Activated T-helper 1 cell treated with anti-CD3 and anti-CD28 coated beads, Interleukin-12 subunit alpha, Interleukin-12 subunit beta, Interleukin-2, Interleukin-4 antibody, amounts not matched to agents 30 ng/mL and 10 ng/mL and 1 ng/mL, durations not matched to agents 14 hours and 24 hours and 36 hours (primary cell): ENCODE measurements at regions of chr4 and their contacts with region 1.

Region 1: DNA sequence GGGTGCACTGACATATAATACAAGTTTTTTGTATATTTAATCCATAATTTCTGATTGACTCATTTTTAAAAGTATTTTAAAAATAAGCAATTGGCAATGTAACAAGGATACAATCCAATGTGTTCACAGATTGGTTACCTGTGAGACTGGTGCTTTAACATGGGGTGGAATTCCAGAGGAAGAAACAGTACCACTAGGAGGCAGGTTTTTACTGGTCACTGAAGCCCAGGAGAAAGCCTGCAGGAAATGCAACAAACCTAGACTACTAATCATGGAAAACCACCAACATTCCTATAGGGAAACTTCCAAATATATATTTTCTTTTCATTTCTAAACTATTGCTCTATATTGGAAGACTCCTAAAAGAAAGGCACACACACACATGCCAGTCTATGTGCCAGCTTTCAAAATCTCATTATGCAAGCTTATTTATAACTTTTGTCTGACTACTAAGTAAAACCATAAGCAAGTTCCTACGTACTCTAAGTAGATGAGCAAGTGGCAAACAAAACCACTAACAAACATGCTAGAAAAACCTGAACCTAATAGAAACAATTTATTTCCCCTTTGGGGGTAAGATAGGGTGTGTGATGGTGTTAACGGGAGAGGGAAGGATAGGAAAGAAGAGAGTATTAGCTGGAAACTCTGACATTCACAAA is 19.2 kb downstream of the G3BP2 start:
- DNase-seq: no peak
- H3K4me3 Mint-ChIP-seq: peak overlapping the region; percentile 41
- H3K27ac Mint-ChIP-seq: peak overlapping the region; percentile 93
- H3K4me1 Mint-ChIP-seq: peaks cover 50% of the 10 kb centered on the region
- H3K27me3 Mint-ChIP-seq: no peaks in the 10 kb centered on the region

Region 2: DNA sequence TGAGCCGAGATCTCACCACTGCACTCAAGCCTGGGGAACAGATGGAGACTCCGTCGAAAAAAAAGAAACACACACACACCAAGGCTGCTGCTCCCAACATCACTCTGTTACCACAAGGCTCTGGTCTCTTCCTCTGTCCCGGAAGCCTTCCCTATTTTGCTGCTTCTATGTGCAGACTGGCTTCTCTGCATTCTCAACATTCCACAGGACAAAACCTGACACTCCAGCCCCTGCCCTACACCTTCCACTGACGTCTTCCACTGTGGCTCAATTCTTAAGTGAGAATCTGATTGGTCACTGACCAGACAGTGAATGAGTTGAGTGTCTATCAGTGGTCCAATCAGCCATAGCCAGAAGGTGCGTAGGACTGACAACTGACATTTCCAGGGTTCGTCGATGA is 92.2 kb before region 1 on chr4:
- intact Hi-C with region 1: no loop called
- DNase-seq: no peak
- H3K4me3 Mint-ChIP-seq: no peak overlapping the region
- H3K27ac Mint-ChIP-seq: no peak overlapping the region
- H3K4me1 Mint-ChIP-seq: peaks cover 16% of the 10 kb centered on the region
- H3K27me3 Mint-ChIP-seq: peaks cover 3% of the 10 kb centered on the region

Region 3: GRCh38 chr4:75630174-75630936 is 23.6 kb before region 1 on chr4 and contains the start of gene CDKL2:
- intact Hi-C with region 1: loop called (anchors 1 kb)
- DNase-seq: peak; percentile 89
- H3K4me3 Mint-ChIP-seq: peak within 1 kb of the TSS; percentile 86
- H3K27ac Mint-ChIP-seq: peak within 1 kb of the TSS; percentile 40
- H3K4me1 Mint-ChIP-seq: peaks cover 20% of the 10 kb centered on the region
- H3K27me3 Mint-ChIP-seq: peaks cover 11% of the 10 kb centered on the region
- total RNA-seq, gene CDKL2: 0.16 and 0.22 TPM in 2 replicates

Region 4: DNA sequence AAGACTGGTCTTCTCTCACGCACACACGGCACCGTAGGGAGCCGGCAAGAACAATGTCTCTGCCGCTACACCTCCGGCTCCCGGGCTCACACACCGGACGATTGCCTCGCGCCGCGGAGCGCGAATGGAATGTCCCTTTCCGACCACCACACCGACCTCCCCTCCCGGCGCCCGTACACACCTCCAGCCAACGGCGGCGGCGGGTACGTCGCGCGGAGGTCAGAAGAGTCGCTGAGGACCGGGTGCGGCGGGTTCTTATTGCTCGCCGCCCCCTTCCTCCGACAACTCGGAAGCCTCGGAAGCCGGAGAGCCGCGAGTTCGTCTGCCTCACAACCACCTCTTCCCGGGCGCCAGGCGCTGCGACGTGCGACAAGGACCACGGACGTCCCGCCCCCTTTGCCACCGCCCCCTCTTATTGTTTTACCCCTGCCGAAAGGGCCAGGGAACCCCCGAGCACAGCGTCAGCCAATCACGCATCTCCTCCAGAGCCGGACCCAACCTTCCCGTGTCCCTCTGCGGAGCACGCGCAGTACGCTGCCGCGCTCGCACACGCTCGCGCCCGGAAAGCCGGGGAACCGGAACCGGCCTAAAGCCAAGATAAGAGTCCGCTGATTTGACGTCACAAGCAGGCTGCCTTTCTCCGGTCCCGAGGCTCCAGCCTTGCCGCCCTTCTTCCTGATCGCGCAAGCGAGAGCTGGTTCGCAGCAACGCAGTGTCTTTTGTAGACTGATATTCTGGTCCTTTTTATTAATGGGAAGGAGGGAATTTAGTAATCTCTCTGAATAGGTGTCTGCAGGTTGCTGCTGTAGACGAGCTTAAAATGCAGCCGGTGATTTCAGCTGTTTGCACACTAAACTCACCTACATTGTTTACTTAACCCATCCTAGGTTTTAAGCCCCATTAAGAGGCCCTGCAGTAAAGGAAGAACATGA is 19.3 kb after region 1 on chr4 and contains the start of gene G3BP2:
- intact Hi-C with region 1: loop called (anchors 1 kb)
- DNase-seq: peak; percentile 96
- H3K4me3 Mint-ChIP-seq: peak within 1 kb of the TSS; percentile 96
- H3K27ac Mint-ChIP-seq: peak within 1 kb of the TSS; percentile 98
- H3K4me1 Mint-ChIP-seq: peaks cover 40% of the 10 kb centered on the region
- H3K27me3 Mint-ChIP-seq: no peaks in the 10 kb centered on the region
- total RNA-seq, gene G3BP2: 143 and 144 TPM in 2 replicates

Region 5: DNA sequence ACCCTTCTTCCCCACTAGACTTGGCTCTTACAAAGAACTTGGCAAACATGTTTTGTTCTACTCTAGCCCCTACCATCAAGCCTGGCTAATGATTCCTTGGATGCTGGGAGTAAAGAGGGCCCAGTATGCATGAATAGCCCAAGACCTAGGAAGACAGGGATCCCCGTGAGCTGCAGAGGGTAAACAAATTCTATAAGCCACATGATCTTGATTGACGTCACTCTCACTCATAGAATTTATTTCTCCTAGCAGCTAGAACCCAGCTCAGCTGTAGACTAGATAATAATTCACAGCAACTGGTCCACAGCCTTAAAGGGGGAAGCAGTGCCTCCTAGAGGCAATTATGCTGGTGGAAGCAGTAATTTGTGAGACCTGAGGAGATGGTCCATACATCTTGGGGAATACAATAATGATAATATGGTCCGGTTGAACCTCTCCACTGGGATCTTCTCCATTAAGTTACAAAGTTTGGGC is 54.3 kb after region 1 on chr4:
- intact Hi-C with region 1: loop called (anchors 1 kb)
- DNase-seq: peak; percentile 38
- H3K4me3 Mint-ChIP-seq: no peak overlapping the region
- H3K27ac Mint-ChIP-seq: no peak overlapping the region
- H3K4me1 Mint-ChIP-seq: peaks cover 8% of the 10 kb centered on the region
- H3K27me3 Mint-ChIP-seq: no peaks in the 10 kb centered on the region

Region 6: GRCh38 chr4:76148142-76148865 is 494.3 kb after region 1 on chr4 and contains the start of gene NUP54:
- intact Hi-C with region 1: loop called (anchors 1 kb)
- DNase-seq: peak; percentile 94
- H3K4me3 Mint-ChIP-seq: peak within 1 kb of the TSS; percentile 99
- H3K27ac Mint-ChIP-seq: peak within 1 kb of the TSS; percentile 97
- H3K4me1 Mint-ChIP-seq: peaks cover 35% of the 10 kb centered on the region
- H3K27me3 Mint-ChIP-seq: no peaks in the 10 kb centered on the region
- total RNA-seq, gene NUP54: 70.6 and 75.1 TPM in 2 replicates